ENCODE measurements at regions of chr5 and their contacts with region 1.

Region 1: GRCh38 chr5:56286015-56286884 is 53.1 kb upstream of the ANKRD55 start:
- DNase-seq: no peak
- ATAC-seq: no peak
- H3K4me3 ChIP-seq: no peak overlapping the region
- H3K4me3 Mint-ChIP-seq: no peak overlapping the region
- H3K27ac ChIP-seq: no peak overlapping the region
- H3K27ac Mint-ChIP-seq: no peak overlapping the region
- H3K4me1 ChIP-seq: no peaks in the 10 kb centered on the region
- H3K4me1 Mint-ChIP-seq: peaks cover 0 to 6% (median 0%) of the 10 kb centered on the region in 7 donors
- H3K27me3 ChIP-seq: no peaks in the 10 kb centered on the region
- H3K27me3 Mint-ChIP-seq: no peaks in the 10 kb centered on the region

Region 2: DNA sequence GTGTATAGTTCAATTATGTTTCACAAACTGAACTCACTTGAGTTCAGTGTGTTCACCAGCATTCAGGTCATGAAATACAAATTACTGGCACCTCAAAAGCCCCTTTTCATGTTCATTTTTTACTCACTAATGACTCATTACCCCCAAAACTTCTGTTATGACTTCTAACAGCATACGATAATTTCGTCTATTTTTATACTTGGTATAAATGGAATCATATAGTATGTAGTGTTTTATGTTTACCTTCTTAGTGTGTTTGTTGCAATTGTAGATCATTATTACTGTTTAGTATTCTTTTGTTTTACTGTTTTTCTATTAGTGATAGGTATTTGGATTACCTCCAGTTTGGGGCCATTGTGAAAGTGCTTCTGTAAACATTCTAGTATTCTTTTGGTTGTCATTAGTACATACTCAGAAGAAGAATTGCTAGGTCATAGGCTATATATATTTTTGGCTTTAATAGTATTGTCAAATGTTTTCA is 515.0 kb before region 1 on chr5:
- CTCF ChIA-PET with region 1: no interaction called
- POLR2A ChIA-PET with region 1: no interaction called
- intact Hi-C with region 1: no loop called
- DNase-seq: no peak
- ATAC-seq: no peak
- H3K4me3 ChIP-seq: no peak overlapping the region
- H3K4me3 Mint-ChIP-seq: no peak overlapping the region
- H3K27ac ChIP-seq: no peak overlapping the region
- H3K27ac Mint-ChIP-seq: no peak overlapping the region
- H3K4me1 ChIP-seq: no peaks in the 10 kb centered on the region
- H3K4me1 Mint-ChIP-seq: peaks cover 0 to 20% (median 0%) of the 10 kb centered on the region in 7 donors
- H3K27me3 ChIP-seq: no peaks in the 10 kb centered on the region
- H3K27me3 Mint-ChIP-seq: peaks cover 0 to 4% (median 0%) of the 10 kb centered on the region in 5 donors

Region 3: GRCh38 chr5:56247592-56247991 is 38.7 kb before region 1 on chr5:
- CTCF ChIA-PET with region 1: no interaction called
- POLR2A ChIA-PET with region 1: no interaction called
- intact Hi-C with region 1: no loop called
- DNase-seq: no peak
- ATAC-seq: no peak
- H3K4me3 ChIP-seq: no peak overlapping the region
- H3K4me3 Mint-ChIP-seq: no peak overlapping the region
- H3K27ac ChIP-seq: no peak overlapping the region
- H3K27ac Mint-ChIP-seq: no peak overlapping the region
- H3K4me1 ChIP-seq: no peaks in the 10 kb centered on the region
- H3K4me1 Mint-ChIP-seq: peaks cover 0 to 10% (median 0%) of the 10 kb centered on the region in 7 donors
- H3K27me3 ChIP-seq: no peaks in the 10 kb centered on the region
- H3K27me3 Mint-ChIP-seq: peaks cover 0 to 6% (median 0%) of the 10 kb centered on the region in 5 donors

Region 4: GRCh38 chr5:56340196-56340980 is 54.1 kb after region 1 on chr5:
- CTCF ChIA-PET with region 1: no interaction called
- POLR2A ChIA-PET with region 1: no interaction called
- intact Hi-C with region 1: no loop called
- DNase-seq: no peak
- ATAC-seq: no peak
- H3K4me3 ChIP-seq: no peak overlapping the region
- H3K4me3 Mint-ChIP-seq: no peak overlapping the region
- H3K27ac ChIP-seq: no peak overlapping the region
- H3K27ac Mint-ChIP-seq: no peak overlapping the region
- H3K4me1 ChIP-seq: no peaks in the 10 kb centered on the region
- H3K4me1 Mint-ChIP-seq: peaks cover 7 to 20% (median 10%) of the 10 kb centered on the region in 7 donors
- H3K27me3 ChIP-seq: no peaks in the 10 kb centered on the region
- H3K27me3 Mint-ChIP-seq: no peaks in the 10 kb centered on the region

Region 5: GRCh38 chr5:56512313-56512996 is 226.2 kb after region 1 on chr5:
- CTCF ChIA-PET with region 1: no interaction called
- POLR2A ChIA-PET with region 1: no interaction called
- intact Hi-C with region 1: no loop called
- DNase-seq: no peak
- ATAC-seq: no peak
- H3K4me3 ChIP-seq: no peak overlapping the region
- H3K4me3 Mint-ChIP-seq: peak overlapping the region in 1 of 10 donors; percentile 30
- H3K27ac ChIP-seq: no peak overlapping the region
- H3K27ac Mint-ChIP-seq: no peak overlapping the region
- H3K4me1 ChIP-seq: peaks cover 4 to 7% of the 10 kb centered on the region in 2 donors
- H3K4me1 Mint-ChIP-seq: peaks cover 19 to 28% (median 23%) of the 10 kb centered on the region in 7 donors
- H3K27me3 ChIP-seq: no peaks in the 10 kb centered on the region
- H3K27me3 Mint-ChIP-seq: no peaks in the 10 kb centered on the region

Region 6: DNA sequence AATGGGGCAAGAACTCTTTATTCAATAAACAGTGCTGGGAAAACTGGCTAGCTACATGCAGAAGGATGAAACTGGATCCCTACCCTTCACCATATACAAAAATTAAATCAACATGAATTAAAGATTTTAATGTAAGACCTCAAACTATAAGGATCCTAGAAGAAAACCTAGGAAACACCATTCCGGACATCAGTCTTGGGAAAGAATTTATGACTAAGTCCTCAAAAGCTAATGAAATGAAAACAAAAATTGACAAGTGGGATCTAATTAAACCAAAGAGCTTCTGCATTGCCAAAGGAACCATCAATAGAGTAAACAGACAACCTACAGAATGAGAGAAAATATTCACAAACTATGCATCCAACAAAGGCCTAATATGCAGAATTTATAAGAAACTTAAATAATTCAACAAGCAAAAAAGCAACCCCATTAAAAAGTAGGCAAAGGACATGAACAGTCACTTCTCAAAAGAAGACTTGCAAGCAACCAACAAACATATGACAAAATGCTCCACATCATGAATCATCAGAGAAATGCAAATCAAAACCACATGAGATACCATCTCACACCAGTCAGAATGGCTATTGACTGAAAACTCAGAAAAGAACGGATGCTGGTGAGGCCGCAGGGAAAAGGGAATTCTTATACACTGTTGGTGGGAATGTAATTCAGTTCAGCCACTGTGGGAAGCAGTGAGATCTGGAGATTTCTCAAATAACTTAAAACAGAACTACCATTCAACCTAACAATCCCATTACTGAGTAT is 424.8 kb after region 1 on chr5:
- CTCF ChIA-PET with region 1: no interaction called
- POLR2A ChIA-PET with region 1: no interaction called
- intact Hi-C with region 1: loop called in 1 of 2 experiments (anchors 5 kb)
- DNase-seq: no peak
- ATAC-seq: no peak
- H3K4me3 ChIP-seq: no peak overlapping the region
- H3K4me3 Mint-ChIP-seq: no peak overlapping the region
- H3K27ac ChIP-seq: no peak overlapping the region
- H3K27ac Mint-ChIP-seq: peak overlapping the region in 1 of 9 donors; percentile 9
- H3K4me1 ChIP-seq: no peaks in the 10 kb centered on the region
- H3K4me1 Mint-ChIP-seq: peaks cover 12 to 47% (median 23%) of the 10 kb centered on the region in 7 donors
- H3K27me3 ChIP-seq: no peaks in the 10 kb centered on the region
- H3K27me3 Mint-ChIP-seq: peaks cover 0 to 12% (median 0%) of the 10 kb centered on the region in 5 donors